ENCODE measurements at regions of chrX and their contacts with region 1.

Region 1: DNA sequence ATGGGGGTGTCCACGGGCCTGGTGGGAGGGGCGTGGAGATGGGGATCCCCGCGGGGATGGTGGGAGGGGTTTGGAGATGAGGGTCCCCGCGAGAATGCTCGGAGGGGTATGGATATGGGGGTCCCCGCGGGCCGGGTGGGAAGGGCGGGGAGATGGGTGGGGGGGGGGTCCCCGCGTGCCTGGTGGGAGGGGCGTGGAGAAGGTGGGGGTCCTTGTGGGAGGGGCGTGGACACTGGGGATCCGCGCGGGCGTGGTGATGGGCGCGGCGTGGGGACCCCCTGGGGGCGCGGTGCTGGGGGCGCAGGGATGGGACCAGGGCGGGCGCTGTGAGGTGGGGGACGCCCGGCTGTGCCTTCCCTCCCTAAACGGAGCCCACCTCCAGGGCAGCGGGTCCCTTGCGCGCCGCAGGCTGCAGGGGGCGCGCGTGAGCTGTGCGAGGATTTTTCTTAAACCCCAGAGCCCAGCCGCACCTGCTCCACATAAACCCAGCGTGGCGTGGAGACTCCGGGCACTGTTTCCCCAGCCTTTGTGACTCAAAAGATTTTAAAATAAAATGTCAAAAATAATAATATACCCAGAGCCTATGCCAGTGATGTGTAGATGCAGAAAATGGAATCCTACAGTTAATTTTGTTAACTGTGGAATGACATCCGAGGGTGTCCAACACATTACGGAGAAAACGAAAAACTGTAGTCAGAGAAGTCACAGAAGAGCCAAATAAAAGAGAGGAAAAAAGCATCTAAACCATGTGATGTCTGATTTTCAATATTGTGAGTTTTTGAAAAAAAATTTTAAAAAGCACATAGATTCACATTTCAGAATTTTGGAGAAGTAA is 1.5 kb upstream of the ASMTL start:
- DNase-seq: peak; percentile 62 to 95 (median 82)

Region 2: DNA sequence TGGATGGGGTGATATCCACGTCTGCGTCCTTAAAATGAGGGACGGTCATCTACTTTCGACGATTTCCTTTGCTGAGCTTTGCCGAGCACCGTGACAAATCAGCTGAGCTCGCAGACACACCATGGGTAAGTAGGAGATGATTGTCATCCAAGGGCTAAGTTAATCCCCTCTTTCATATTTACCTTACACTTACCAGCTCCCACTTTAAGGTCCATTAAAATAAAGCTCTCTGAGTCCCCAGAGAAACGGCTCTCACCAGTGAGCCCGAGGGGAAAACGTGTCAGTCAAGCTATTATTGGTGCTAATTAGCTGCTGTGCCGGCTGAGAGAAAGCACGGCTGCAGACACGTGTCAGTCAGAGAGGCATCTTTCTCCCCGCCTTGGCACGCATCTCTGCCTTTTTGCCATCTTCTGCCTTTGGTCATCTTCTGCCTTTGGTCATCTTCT is 313.9 kb before region 1 on chrX:
- intact Hi-C with region 1: no loop called
- DNase-seq: no peak

Region 3: DNA sequence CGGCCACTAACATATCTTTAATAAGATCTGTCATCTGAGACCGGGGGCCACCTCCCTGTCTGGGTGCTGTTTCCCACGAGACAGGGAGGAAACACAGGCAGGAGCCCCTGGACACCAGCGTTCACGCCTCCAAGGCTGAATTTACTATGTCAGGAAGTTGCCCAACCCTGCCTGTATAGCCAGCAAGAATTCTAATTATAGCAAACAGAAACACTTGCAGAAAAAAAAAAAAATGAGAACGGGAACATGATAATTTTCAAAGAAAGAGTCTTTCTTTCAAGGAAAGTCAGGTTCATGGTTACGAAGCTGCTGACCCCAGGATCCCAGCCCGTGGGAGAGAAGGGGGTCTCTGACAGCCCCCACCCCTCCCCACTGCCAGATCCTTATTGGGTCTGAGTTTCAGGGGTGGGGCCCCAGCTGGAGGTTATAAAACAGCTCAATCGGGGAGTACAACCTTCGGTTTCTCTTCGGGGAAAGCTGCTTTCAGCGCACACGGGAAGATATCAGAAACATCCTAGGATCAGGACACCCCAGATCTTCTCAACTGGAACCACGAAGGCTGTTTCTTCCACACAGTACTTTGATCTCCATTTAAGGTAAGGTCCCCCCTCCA is 117.7 kb before region 1 on chrX and contains the start of gene IL3RA:
- intact Hi-C with region 1: no loop called
- DNase-seq: peak in 3 of 10 donors; percentile 21 to 82 (median 69)

Region 4: GRCh38 chrX:1368385-1368698 is 85.8 kb before region 1 on chrX:
- intact Hi-C with region 1: no loop called
- DNase-seq: peak in 2 of 10 donors; percentile 8 to 43

Region 5: GRCh38 chrX:1391707-1392375 is 62.3 kb before region 1 on chrX and contains the start of gene SLC25A6:
- intact Hi-C with region 1: loop called (anchors 1 kb)
- DNase-seq: peak; percentile 97 to 100 (median 99)

Region 6: DNA sequence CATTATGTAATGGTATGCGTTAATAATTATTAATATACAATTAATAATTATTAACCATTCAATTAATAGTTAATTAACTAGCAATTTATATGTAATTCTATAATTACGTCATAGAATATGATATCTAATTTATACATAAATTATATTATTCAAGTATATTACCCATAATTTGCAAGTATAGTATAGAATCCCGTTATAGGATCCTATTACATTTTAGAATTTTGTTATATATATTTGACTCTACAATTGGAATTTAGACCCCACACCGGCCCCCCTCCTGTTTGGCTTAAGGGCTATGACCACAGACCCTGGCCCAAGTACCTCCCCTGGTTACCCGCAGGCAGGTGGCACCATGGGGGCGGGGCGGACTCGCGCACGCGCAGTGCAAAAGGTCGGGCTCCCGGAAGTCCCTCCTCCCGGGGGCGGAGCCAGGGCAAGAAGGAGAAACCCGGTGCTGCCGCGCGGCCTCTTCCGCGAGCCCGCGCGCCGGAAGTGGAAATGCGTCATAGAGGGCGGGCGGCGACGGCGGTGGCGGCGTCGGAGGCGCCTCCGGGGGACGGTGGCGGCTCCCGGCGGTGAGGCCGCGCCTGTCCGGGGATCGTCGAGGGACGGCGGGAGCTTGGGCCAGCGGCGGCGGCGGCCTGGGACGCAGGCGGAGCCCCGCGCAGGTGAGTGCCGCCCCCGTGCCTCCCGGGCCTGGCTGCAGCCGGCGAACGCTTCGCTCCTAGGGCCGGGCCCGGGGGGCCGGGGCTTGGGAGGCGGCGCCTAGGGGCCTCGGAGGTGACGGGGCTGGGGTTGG is 137.1 kb after region 1 on chrX and contains the start of gene AKAP17A:
- intact Hi-C with region 1: loop called (anchors 5 kb)
- DNase-seq: peak; percentile 94 to 100 (median 98)

Region 7: GRCh38 chrX:2595258-2595657 is 1141.1 kb after region 1 on chrX:
- intact Hi-C with region 1: loop called (anchors 2 kb)
- DNase-seq: peak in 1 of 10 donors; percentile 2

Region 8: DNA sequence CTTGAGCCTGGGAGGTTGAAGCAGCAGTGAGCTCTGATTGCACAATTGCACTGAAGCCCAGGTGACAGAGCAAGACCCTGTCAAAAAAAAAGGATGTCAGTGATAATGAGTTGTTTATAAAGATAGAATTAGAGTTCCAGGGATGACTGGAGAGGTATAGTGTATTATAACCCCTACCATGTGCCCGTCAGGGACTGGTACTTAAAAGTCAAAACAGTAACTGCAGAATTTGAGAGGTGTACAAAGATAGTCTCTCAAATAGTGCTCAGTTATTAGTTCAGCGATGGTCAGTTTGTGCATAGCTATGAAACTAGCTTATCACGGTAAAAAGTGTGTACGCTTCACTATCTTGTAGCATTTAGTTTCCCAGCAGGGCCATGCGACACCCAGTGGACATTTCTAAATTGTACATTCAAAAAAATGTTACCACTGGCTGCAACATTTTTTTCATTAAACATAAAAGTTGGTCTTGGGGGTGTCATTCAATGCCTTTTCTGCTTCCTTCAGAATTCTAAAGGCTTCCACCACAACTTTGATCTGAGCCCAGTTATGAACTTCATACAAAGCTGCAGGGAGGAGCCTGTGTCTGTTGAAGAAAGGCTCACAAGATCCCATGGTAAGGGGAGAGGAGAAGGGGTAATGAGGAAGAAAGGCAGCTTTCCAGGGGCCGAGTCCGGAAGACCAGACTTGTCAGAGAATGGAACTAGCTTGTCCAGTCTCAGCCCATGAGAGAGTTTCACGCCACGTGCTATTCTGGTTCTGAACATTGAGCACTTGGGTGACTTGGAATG is 1365.4 kb after region 1 on chrX:
- intact Hi-C with region 1: loop called (anchors 10 kb)
- DNase-seq: no peak

Region 9: DNA sequence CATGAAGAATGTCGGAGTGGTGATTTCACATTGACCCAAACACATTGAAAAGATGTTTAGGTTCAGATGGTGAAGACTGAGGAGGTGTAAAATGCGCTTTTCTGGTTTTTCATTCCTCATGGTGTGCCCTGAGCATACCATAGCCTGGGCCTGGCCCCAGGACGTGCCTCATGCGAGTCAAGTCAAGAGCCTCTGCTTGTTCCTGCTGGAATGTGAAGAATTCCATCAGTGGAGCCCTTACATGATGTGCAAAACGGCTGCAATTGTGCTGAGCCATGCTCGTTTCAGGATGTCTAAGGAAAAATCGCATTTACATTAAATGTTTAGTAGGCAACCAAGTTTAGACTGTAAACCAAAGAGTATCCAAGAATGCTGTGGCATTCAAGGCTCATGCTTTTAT is 1409.5 kb after region 1 on chrX:
- intact Hi-C with region 1: no loop called
- DNase-seq: no peak